ENCODE measurements at regions of chr9 and their contacts with region 1.

Region 1: DNA sequence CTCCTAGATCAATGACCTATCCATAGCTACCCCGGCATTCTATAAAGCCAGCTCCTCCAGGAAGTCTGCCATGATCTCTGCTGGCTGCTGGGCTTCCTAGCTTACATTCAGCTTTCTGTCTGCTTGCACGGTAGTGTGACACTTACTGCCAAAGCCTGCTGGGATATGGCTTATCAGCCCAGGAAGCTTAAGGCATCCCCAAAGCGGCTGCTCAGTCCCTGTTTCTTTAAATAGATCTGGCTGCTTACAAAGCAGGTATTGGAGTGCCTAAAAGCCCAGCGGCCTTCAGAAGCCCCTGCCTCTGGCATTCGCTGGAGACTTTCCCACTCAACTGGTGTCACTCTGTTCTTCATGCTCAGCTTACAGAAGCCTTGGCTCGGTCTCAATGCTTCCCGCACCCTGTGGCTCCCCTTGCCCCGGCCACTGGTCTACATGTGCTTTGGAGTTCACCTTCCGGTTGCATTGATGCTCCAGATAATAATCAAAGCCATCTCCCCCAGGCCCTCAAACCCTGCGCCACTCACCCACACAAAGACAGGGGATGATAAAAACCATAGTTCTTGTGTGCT is 31.3 kb upstream of the STRBP start:
- DNase-seq: no peak
- H3K4me3 ChIP-seq: no peak overlapping the region
- H3K27ac ChIP-seq: no peak overlapping the region
- H3K4me1 ChIP-seq: no peaks in the 10 kb centered on the region
- H3K27me3 ChIP-seq: no peaks in the 10 kb centered on the region
- CTCF ChIP-seq: no peak

Region 2: GRCh38 chr9:123335193-123335985 is 35.7 kb after region 1 on chr9:
- CTCF ChIA-PET with region 1: no interaction called
- dilution Hi-C with region 1: no loop called
- in situ Hi-C with region 1: no loop called
- intact Hi-C with region 1: no loop called
- DNase-seq: peak; percentile 47
- H3K4me3 ChIP-seq: no peak overlapping the region
- H3K27ac ChIP-seq: no peak overlapping the region
- H3K4me1 ChIP-seq: peaks cover 14% of the 10 kb centered on the region
- H3K27me3 ChIP-seq: no peaks in the 10 kb centered on the region
- CTCF ChIP-seq: no peak

Region 3: DNA sequence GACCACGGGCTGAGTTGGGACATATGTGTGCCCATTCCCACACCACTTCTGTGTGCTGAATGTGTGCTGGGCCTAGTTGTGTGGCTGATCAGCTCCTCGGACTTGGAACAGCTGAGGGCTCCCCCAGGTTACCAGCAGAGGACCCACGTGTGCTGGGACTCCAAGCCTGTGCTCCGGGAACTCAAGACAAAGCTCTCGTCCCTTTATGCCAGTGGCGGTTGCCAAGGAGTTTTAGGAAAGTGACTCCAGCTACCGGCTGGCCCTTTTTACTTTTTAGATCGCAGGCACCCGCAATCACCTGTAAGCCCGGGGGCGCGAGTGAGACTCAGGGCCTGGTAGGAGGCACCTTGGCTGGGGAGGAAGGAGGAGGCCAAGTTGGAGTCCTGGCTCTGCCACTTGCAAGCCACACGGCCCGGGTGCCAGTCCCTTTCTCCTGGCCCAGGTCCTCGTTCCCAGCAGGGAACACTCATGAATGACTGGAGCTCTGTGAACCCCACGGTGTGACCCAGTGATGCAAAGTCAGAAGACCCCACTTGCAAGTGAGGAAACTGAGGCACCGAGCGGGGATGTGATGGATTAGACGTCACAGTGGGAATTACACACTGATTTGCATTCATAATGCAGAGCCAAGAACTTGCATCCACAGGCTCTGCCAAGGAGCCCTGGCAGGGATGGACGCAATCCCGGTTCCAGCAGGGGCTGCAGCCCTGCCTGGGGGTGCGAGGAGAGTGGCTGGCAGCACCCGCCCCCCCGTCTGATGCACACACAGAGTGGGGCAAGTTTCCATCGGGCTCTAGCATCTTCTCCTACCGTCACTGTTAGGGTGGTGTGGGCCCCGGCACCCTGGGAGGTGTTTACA is 83.2 kb after region 1 on chr9:
- CTCF ChIA-PET with region 1: no interaction called
- dilution Hi-C with region 1: loop called (anchors 5 kb)
- in situ Hi-C with region 1: no loop called
- intact Hi-C with region 1: no loop called
- DNase-seq: no peak
- H3K4me3 ChIP-seq: no peak overlapping the region
- H3K27ac ChIP-seq: no peak overlapping the region
- H3K4me1 ChIP-seq: no peaks in the 10 kb centered on the region
- H3K27me3 ChIP-seq: no peaks in the 10 kb centered on the region
- CTCF ChIP-seq: no peak